Endothelial cell of umbilical vein (primary cell): ENCODE measurements at regions of chr2 and their contacts with region 1.

Region 1: GRCh38 chr2:240983361-240983995 is 14.9 kb upstream of the SNED1 start:
- DNase-seq: peak; percentile 49
- H3K4me3 ChIP-seq: no peak overlapping the region
- H3K27ac ChIP-seq: no peak overlapping the region
- H3K4me1 ChIP-seq: peaks cover 14% of the 10 kb centered on the region
- H3K27me3 ChIP-seq: peaks cover 7 to 8% of the 10 kb centered on the region in 2 experiments
- CTCF ChIP-seq: peak; percentile 50 to 80
- POLR2A ChIP-seq: no peak

Region 2: GRCh38 chr2:240759454-240759853 is 224.0 kb before region 1 on chr2:
- CTCF ChIA-PET with region 1: no interaction called
- POLR2A ChIA-PET with region 1: no interaction called
- dilution Hi-C with region 1: no loop called
- intact Hi-C with region 1: no loop called
- DNase-seq: no peak
- H3K4me3 ChIP-seq: no peak overlapping the region
- H3K27ac ChIP-seq: no peak overlapping the region
- H3K4me1 ChIP-seq: no peaks in the 10 kb centered on the region
- H3K27me3 ChIP-seq: no peaks in the 10 kb centered on the region
- CTCF ChIP-seq: no peak
- POLR2A ChIP-seq: no peak

Region 3: GRCh38 chr2:240857039-240858008 is 126.2 kb before region 1 on chr2:
- CTCF ChIA-PET with region 1: no interaction called
- POLR2A ChIA-PET with region 1: no interaction called
- dilution Hi-C with region 1: no loop called
- intact Hi-C with region 1: no loop called
- DNase-seq: no peak
- H3K4me3 ChIP-seq: no peak overlapping the region
- H3K27ac ChIP-seq: no peak overlapping the region
- H3K4me1 ChIP-seq: no peaks in the 10 kb centered on the region
- H3K27me3 ChIP-seq: no peaks in the 10 kb centered on the region
- CTCF ChIP-seq: no peak
- POLR2A ChIP-seq: no peak

Region 4: DNA sequence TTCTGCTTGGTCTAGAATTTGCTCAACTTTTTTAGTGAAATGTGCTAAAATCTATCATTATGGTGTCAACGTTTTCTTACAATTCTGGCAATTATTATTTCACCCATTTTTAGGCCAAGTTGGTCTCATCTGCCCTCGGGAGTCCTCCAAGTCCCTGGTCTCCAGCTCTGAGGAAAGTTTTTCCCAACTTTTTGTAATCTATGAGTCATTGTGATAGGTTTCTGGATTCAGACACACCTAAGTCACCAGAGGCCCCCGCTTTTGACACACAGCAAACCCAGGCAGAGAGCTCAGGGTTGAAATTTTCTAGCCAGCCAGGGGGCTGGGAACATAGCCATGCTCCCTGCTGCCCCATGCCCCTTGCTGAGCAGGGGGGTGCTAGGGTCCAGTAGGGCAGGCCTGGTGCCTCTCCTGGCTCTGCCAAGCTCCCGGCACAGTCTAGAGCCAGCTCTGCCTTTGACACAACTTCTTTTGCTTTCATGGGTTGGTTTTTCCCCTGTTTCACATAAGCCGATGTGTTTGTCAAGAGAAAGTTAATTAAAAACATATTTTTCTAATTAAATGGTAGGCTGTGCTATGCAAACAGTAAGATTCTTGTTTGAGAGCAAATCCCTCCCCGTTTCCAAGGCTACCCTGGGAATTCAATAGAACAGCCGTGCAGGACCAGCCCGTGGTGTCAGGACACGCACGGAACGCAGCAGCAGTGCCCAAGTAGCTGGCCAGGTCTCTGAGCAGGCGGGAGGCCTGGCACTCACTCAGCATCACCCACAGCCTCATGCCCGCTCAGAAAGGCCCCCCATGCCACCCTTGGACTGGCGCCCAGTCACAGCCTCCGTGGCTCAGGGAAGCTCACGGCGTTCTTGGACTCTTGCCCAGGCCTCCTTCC is 10.6 kb before region 1 on chr2:
- CTCF ChIA-PET with region 1: interaction called, 10 read pairs
- POLR2A ChIA-PET with region 1: no interaction called
- dilution Hi-C with region 1: no loop called
- intact Hi-C with region 1: no loop called
- DNase-seq: no peak
- H3K4me3 ChIP-seq: no peak overlapping the region
- H3K27ac ChIP-seq: no peak overlapping the region
- H3K4me1 ChIP-seq: no peaks in the 10 kb centered on the region
- H3K27me3 ChIP-seq: peaks cover 2 to 8% of the 10 kb centered on the region in 2 experiments
- CTCF ChIP-seq: no peak
- POLR2A ChIP-seq: no peak

Region 5: DNA sequence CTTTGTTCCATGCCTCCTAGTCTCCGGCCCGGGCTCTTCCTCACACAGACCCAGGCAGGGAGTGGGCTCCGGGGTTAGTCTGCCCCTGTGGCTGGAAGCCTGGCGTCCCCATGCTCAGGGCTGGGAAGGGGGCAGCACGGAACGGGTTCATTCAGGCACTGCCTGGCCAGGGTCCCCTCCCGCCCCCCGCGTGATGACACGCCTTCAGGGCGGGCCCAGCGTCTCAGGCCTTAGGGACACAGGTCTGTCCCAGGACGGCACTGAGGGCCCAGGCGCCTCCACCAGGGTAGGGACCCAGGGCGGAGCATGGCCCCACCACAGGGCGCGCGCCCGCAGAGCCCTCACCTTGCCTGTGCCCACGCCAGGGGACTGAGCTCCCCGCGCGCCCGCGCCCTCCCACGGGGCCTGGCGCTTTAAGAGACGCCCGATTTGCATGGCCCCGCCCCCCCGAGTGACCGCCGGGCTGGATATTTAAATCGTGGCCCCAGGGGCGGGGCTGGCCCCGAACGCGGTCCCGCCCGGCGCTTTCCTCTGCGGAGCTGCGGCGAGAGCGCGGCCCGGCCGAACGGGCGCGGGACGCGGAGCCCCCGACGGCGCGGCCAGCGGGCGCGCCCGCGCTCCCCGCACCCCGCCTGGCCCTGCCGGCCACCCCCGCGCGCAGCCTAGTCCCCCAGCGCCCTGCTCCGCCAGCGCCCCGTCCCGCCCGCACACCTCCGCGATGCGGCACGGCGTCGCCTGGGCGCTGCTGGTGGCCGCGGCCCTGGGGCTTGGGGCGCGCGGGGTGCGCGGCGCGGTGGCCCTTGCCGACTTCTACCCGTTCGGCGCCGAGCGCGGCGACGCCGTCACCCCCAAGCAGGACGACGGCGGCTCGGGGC is 14.9 kb after region 1 on chr2 and contains the start of gene SNED1:
- CTCF ChIA-PET with region 1: interaction called, 12 read pairs
- POLR2A ChIA-PET with region 1: no interaction called
- dilution Hi-C with region 1: no loop called
- intact Hi-C with region 1: no loop called
- DNase-seq: peak; percentile 93
- H3K4me3 ChIP-seq: peak within 1 kb of the TSS; percentile 42 to 46 (median 42)
- H3K27ac ChIP-seq: peak within 1 kb of the TSS; percentile 80
- H3K4me1 ChIP-seq: peaks cover 12% of the 10 kb centered on the region
- H3K27me3 ChIP-seq: no peaks in the 10 kb centered on the region
- CTCF ChIP-seq: no peak
- POLR2A ChIP-seq: peak; percentile 68
- total RNA-seq, gene SNED1: 17.2 and 22.1 TPM in 2 replicates

Region 6: DNA sequence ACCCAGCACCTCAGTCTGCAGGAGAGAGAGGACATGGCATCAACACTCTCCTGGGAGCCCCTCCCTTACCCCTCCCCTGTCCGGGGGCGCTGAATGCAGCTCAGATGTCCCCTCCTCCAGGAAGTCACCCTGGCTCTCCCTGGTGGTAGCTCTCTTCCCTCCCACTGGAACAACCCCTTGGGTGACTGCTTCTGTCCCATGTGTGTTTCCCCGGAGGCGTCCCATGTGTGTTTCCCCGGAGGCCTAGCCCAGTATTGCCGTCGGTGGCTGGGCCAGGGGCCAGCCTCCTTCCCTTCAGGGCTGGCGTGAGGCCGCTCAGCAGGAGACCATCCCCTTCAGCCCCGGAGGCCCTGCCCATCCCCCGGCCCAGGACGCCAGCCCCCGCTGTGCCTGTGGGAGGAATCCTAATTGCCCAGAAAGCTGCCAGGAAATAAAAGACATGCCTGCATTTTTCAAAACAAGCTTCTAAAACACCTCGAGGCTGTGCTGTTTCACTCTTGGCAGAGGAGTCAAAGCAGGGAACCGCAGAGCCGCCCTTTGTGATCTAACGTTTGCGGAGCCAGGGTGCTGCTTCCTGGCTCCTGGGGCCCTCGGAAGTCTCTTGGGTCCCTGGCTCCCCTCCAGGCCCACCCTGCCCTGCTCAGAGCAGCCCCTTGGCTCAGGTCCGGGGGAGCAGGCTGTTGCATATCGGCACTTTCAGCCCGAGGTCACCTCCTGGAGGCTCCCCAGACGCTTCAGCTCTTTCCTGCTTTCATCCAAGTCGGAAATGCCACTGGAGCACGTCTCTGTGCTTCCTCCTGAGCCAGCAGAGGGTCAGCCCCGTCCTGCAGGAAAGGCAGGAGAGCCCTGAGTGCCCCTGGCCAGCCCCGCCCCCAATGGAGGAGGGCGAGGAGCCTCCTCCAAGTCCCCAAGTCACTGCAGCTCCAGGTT is 26.4 kb after region 1 on chr2:
- CTCF ChIA-PET with region 1: interaction called, 30 read pairs
- POLR2A ChIA-PET with region 1: no interaction called
- dilution Hi-C with region 1: no loop called
- intact Hi-C with region 1: no loop called
- DNase-seq: peak; percentile 77
- H3K4me3 ChIP-seq: peak overlapping the region in 1 of 3 experiments; percentile 3
- H3K27ac ChIP-seq: peak overlapping the region; percentile 58
- H3K4me1 ChIP-seq: peaks cover 22% of the 10 kb centered on the region
- H3K27me3 ChIP-seq: no peaks in the 10 kb centered on the region
- CTCF ChIP-seq: no peak
- POLR2A ChIP-seq: peak; percentile 58

Region 7: GRCh38 chr2:241064008-241064801 is 80.7 kb after region 1 on chr2:
- CTCF ChIA-PET with region 1: interaction called, 15 read pairs
- POLR2A ChIA-PET with region 1: no interaction called
- dilution Hi-C with region 1: no loop called
- intact Hi-C with region 1: no loop called
- DNase-seq: peak; percentile 4
- H3K4me3 ChIP-seq: no peak overlapping the region
- H3K27ac ChIP-seq: no peak overlapping the region
- H3K4me1 ChIP-seq: no peaks in the 10 kb centered on the region
- H3K27me3 ChIP-seq: no peaks in the 10 kb centered on the region
- CTCF ChIP-seq: no peak
- POLR2A ChIP-seq: no peak

Region 8: DNA sequence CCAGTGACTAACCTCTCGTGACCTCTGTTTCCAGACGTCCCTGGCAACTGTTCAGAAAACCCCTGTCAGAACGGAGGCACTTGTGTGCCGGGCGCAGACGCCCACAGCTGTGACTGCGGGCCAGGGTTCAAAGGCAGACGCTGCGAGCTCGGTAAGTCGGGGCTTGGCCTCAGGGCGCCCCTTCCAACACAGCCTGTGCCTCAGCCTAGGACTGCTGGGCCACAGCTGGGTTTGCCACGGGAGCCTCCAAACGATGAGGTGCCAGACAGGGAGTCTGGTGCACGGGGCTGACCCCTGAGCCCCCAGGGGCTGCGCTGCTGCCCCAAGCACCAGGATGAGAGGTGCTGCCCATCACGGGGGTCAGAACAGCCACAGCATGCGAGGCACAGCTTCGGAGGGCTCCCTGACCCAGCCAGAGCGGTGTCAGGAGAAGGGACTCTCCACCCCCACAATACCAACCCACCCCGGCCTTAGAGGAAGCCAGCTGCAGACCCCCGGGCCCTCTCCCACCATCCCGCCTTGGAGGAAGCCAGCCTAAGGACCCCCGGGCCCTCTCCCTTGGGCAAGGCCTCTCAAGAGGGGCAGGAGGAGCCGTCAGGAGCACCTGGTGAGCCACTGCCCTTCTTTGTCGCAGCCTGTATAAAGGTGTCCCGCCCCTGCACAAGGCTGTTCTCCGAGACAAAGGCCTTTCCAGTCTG is 98.3 kb after region 1 on chr2:
- CTCF ChIA-PET with region 1: interaction called, 17 read pairs
- POLR2A ChIA-PET with region 1: no interaction called
- dilution Hi-C with region 1: no loop called
- intact Hi-C with region 1: no loop called
- DNase-seq: no peak
- H3K4me3 ChIP-seq: no peak overlapping the region
- H3K27ac ChIP-seq: no peak overlapping the region
- H3K4me1 ChIP-seq: no peaks in the 10 kb centered on the region
- H3K27me3 ChIP-seq: no peaks in the 10 kb centered on the region
- CTCF ChIP-seq: no peak
- POLR2A ChIP-seq: no peak